GM10248 (cell line): ENCODE measurements at regions of chr13 and their contacts with region 1.

Region 1: DNA sequence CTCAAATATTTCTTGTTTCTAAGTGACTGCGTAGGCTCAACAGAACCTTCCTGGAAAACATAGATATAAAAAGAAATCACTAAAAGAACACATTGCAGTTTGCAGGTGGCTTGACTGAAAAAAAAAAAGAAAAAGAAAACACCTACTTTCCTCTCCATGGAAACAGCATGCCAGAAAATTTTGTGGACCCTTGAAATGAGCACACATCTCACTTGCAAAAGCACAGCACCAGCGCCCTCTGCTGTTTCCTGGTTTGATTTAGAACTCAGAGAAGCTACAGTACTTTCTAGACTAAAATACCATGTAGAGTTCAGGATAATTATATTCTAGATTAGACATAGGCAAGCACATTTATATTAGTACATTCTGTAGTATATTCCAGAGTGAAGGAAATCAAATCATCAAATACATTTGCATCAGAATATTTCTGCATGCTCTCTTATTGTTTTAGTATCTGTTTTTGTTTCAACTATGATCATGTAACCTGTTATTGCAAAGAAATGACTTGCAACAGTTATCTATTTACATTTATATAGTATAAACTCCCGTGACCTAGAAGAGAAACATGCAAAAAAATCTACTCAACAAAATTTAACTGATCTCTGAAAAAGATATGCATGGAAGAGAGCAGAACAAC is 22.3 kb upstream of the XPO4 start:
- DNase-seq: peak; percentile 56
- CTCF ChIP-seq: peak; percentile 79

Region 2: GRCh38 chr13:20197361-20197834 is 727.5 kb before region 1 on chr13:
- CTCF ChIA-PET with region 1: interaction called, 13 read pairs
- POLR2A ChIA-PET with region 1: no interaction called
- DNase-seq: peak; percentile 50
- CTCF ChIP-seq: peak; percentile 66

Region 3: GRCh38 chr13:20901668-20902437 is 23.0 kb before region 1 on chr13:
- CTCF ChIA-PET with region 1: interaction called, 12 read pairs
- POLR2A ChIA-PET with region 1: no interaction called
- DNase-seq: peak; percentile 35
- CTCF ChIP-seq: no peak

Region 4: DNA sequence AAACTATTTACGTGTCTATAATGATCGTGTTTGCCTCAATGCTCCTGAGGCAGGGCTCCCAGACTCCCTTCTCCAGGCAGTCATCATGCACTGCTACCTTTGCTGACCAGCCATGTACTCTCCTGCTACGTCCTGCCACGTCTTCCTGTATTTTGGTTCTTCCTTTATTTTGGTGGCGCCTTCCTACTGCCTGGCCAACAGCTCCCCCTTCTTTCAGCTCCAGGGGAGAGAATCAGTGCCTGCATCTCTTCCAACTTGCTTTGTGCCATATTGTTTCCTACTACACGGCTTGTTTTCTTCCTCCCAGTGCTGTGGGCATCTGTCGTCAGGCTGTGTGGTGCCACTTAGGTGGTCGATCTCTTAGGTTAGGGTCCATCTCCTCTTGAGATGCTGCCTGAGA is 842.1 kb after region 1 on chr13:
- CTCF ChIA-PET with region 1: no interaction called
- POLR2A ChIA-PET with region 1: no interaction called
- DNase-seq: no peak
- CTCF ChIP-seq: no peak